Thyroid gland (tissue), 4 donors: ENCODE measurements at regions of chr16 and their contacts with region 1.

Region 1: DNA sequence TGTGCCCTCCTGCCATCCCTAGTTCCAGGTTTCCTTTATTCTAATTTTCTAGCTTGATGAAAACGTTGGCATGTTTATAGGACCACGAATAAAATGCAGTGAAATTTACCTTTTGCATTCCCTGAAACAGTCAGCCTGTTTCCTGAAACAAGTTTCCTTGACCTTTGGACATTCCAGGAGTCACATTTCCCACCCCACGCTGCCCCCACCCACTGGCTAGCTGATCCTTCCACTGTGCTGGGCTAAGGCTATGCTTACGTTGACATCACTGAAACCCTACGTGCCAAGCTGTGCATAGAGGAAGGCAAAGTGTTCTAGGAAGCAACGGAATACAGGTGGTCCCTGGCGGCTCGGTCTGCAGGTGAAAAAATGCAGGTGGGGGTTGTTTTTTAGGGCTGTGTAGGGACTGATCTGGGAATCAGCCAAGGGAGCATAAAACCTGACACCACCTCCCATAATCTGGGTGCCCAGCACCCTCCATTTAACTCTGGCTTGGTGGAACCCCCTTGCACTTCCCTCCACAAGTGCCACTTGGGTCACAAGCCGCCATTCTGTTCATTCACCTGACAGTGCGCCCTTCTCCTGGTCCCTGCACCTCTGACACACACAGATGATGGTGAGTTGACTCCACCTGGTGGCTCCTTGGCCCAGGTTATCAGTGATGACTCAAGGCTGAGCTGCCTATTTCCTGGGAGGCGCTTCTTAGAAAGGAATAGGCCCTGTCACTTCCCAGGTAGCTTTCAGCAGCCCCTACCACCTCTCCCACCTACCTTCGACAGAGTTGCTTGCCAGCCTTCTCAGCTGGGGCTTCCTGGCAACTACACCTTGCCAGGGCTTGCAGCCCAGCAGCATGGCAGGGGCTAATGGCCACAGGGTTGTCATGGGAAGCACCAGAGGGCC is 83.7 kb downstream of the N4BP1 start:
- DNase-seq: peak; percentile 69 to 72
- H3K4me3 ChIP-seq: no peak overlapping the region
- H3K27ac ChIP-seq: no peak overlapping the region
- H3K4me1 ChIP-seq: no peaks in the 10 kb centered on the region
- H3K27me3 ChIP-seq: no peaks in the 10 kb centered on the region
- CTCF ChIP-seq: peak in 4 of 6 experiments; percentile 42 to 68 (median 49)
- POLR2A ChIP-seq: no peak

Region 2: DNA sequence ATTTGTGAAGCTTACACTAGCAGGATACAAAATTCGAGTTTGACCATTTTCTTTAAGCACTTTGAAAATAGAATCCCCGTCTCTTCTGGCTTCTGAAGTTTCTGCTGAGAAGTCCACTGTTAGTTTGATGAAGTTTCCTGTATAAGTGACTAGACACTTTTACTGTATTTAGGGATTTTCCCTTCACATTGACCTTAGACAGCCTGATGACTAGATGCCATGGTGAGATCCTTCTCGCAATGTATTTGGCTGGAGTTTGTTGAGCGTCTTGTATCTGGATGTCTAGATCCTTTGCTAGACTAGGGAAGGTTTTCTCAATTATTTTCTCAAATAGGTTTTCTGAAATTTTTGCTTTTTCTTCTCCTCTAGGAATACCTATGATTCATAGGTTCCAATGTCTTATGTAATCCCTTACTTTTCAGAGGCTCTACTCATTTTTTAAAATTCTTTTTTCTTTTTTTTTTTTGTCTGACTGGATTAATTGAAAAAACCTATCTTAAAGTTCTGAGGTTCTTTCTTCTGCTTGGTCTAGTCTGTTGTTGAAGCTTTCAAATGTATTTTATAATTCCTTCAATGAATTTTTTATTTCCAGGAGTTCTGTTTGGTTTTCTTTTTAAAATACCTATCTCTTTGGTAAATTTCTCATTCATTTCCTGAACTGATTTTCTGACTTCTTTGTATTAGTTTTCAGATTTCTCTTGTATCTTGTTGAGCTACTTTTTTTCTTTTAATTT is 215.2 kb before region 1 on chr16:
- intact Hi-C with region 1: no loop called
- DNase-seq: no peak
- H3K4me3 ChIP-seq: no peak overlapping the region
- H3K27ac ChIP-seq: no peak overlapping the region
- H3K4me1 ChIP-seq: peaks cover 27 to 30% of the 10 kb centered on the region in 2 donors
- H3K27me3 ChIP-seq: no peaks in the 10 kb centered on the region
- CTCF ChIP-seq: no peak
- POLR2A ChIP-seq: no peak

Region 3: DNA sequence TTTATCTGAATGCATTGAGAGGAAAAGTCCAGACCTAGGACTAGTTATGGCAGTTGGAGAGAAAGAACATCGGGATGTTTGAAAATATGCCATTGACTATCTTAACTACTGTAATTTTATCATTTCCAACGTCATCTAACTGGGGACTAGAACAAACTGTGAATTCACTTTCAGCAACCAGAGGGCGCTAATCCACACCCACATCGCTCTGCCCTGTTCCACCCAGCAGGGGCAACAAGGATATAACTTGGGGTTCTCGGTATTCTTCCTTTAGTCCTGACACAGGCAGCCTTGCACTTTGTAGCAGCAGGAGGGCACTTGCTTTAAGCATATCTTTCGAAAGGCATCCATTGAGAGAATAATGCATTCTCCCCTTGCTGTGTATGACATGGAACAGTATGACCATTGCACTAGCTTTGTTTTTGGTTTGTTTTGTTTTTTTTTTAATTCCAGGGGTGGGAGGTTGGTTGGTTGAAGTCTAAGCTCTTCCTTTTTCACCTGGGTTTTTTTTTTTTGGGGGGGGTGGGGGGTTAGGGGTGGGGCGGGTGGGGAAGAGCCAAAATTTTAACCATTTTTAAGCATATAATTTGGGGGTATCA is 172.6 kb before region 1 on chr16:
- intact Hi-C with region 1: loop called (anchors 5 kb)
- DNase-seq: peak; percentile 47 to 50
- H3K4me3 ChIP-seq: no peak overlapping the region
- H3K27ac ChIP-seq: no peak overlapping the region
- H3K4me1 ChIP-seq: no peaks in the 10 kb centered on the region
- H3K27me3 ChIP-seq: no peaks in the 10 kb centered on the region
- CTCF ChIP-seq: peak; percentile 64 to 97 (median 82)
- POLR2A ChIP-seq: no peak

Region 4: GRCh38 chr16:48609652-48610029 is 83.3 kb after region 1 on chr16:
- intact Hi-C with region 1: no loop called
- DNase-seq: peak; percentile 55 to 61
- H3K4me3 ChIP-seq: peak overlapping the region; percentile 87 to 98 (median 94)
- H3K27ac ChIP-seq: peak overlapping the region; percentile 56 to 95 (median 85)
- H3K4me1 ChIP-seq: peaks cover 32 to 43% of the 10 kb centered on the region in 2 donors
- H3K27me3 ChIP-seq: no peaks in the 10 kb centered on the region
- CTCF ChIP-seq: no peak
- POLR2A ChIP-seq: no peak